A673 (cell line): ENCODE measurements at regions of chr16 and their contacts with region 1.

Region 1: DNA sequence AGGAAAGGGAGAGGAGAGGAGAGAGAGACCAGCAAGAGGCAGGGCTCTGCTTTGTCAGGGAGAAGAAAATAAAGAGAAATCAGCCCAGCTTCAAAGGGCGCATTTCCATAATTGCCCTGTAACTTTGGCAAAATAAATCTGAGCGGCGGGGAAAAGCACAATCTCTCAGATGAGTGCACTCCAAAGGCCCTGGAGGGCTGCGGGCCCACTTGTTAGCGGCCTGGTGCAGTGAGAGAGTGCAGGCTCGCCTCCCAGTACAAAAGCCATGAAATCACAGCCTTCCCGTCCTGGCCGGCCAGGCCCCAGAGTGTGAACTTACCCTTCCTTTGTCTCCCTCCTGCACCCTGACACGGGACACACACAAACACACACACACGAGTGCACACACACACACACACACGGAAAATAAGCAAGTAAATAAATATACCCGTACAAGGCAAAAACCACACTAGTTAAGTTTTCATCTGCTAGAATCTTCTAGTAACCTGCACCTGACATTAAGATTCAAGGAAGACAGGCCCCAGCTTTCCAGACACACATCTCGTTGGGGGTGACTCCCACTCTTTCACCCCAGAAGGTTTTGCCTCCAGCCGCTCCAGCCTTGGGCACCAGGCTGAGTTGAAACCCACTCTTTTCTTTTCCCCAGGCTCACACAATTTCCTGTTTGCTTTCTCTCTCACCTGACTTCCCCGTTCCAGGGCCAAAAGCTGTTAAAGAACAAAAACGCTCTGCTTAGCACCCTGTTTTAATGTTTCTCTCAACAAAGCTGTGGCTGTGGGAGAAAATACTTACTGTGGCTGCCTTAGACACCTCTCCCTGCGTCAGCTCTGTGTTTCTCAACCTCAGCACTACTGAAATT is 8.5 kb downstream of the IRX3 start:
- DNase-seq: no peak
- H3K4me3 ChIP-seq: no peak overlapping the region
- H3K27ac ChIP-seq: no peak overlapping the region
- H3K4me1 ChIP-seq: no peaks in the 10 kb centered on the region
- H3K27me3 ChIP-seq: no peaks in the 10 kb centered on the region
- CTCF ChIP-seq: no peak

Region 2: GRCh38 chr16:54193665-54194333 is 84.3 kb before region 1 on chr16:
- CTCF ChIA-PET with region 1: no interaction called
- POLR2A ChIA-PET with region 1: no interaction called
- intact Hi-C with region 1: loop called (anchors 5 kb)
- DNase-seq: peak; percentile 88
- H3K4me3 ChIP-seq: peak overlapping the region; percentile 22
- H3K27ac ChIP-seq: no peak overlapping the region
- H3K4me1 ChIP-seq: peaks cover 8% of the 10 kb centered on the region
- H3K27me3 ChIP-seq: peaks cover 8% of the 10 kb centered on the region
- CTCF ChIP-seq: peak; percentile 97

Region 3: GRCh38 chr16:54289242-54289944 is 11.3 kb after region 1 on chr16:
- CTCF ChIA-PET with region 1: no interaction called
- POLR2A ChIA-PET with region 1: no interaction called
- intact Hi-C with region 1: no loop called
- DNase-seq: no peak
- H3K4me3 ChIP-seq: no peak overlapping the region
- H3K27ac ChIP-seq: no peak overlapping the region
- H3K4me1 ChIP-seq: no peaks in the 10 kb centered on the region
- H3K27me3 ChIP-seq: no peaks in the 10 kb centered on the region
- CTCF ChIP-seq: no peak

Region 4: GRCh38 chr16:54402270-54402669 is 124.2 kb after region 1 on chr16:
- CTCF ChIA-PET with region 1: no interaction called
- POLR2A ChIA-PET with region 1: no interaction called
- intact Hi-C with region 1: no loop called
- DNase-seq: no peak
- H3K4me3 ChIP-seq: no peak overlapping the region
- H3K27ac ChIP-seq: no peak overlapping the region
- H3K4me1 ChIP-seq: no peaks in the 10 kb centered on the region
- H3K27me3 ChIP-seq: no peaks in the 10 kb centered on the region
- CTCF ChIP-seq: no peak